MCF 10A (cell line): ENCODE measurements at regions of chr22 and their contacts with region 1.

Region 1: DNA sequence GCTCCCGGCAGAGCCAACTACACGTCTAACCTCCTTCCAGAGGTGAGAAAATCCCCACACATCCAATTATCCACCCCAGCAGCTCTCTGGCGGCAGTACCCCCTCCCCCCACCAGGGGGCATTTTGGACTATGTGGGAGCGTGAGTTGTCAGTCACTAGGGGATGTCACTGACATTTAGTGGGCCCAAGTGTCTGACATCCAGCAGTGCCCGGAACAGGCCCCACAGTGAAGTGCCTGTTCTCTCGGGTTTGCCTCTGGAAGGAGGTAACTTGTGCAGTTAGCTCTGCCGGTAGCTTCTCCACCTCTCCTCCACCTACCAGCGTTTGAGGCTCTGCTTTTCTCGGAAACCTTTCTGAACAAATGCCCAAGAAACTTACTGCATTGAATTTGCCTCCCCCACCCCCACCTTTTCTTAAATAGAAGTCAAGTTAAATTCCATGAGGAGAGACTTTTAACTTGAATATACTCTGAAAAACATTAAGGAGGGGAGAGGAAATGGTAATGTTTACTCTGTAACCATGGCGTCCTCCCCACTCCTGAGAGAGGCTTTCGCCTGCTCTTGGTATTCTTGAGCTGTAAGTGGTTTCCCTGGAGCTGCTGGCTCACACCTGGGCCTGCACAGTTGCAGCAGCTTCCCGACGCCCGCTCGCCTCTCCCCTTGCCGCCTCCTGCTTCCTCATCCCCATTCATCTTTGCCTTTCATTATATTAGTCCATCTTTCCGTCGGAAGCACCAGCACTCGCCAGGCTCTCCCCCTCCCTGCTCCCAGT is 112.8 kb downstream of the WNT7B start:
- DNase-seq: peak; percentile 66
- H3K4me3 Mint-ChIP-seq: no peak overlapping the region
- H3K27ac Mint-ChIP-seq: no peak overlapping the region
- H3K4me1 Mint-ChIP-seq: no peaks in the 10 kb centered on the region
- H3K27me3 Mint-ChIP-seq: peaks cover 17% of the 10 kb centered on the region
- CTCF ChIP-seq: peak; percentile 90

Region 2: DNA sequence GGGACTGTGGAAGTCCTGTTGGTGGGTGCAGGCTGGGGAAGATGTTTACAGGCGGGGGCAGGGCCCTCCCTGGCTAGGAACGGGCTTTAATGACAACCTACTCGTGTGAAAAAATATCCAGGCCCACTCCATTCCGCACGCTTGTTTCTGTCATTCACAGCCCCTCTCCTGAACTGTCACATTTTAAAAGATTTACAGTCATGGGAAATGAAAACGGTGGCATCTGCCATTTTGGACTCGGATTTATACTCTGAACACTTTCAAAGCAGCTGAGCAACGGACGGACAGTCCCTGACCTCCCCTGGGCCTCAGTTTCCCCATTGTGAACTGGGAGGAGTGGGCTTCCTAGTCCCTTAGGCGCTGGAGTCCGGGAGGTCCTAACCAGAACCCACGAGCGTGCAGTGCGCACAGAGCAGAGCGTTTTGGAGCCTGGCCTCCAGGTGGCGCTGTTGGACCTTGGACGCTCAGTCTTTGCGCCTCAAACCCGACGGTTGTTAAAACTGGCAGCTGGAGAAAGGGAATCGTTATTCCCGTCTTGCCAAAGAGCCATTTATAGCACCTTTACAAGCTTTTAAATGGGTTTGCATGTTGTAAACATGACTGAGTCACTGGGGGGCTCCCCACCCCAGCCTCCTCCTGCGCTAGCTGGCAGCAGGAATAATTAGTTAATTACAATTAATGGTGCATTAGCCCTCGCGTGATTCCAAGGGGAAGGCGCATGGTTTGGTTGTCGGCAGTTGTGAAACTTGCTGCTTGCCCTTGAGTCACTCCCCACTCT is 286.2 kb before region 1 on chr22:
- CTCF ChIA-PET with region 1: interaction called, 18 read pairs
- POLR2A ChIA-PET with region 1: no interaction called
- intact Hi-C with region 1: loop called (anchors 1 kb)
- DNase-seq: peak; percentile 80
- H3K4me3 Mint-ChIP-seq: no peak overlapping the region
- H3K27ac Mint-ChIP-seq: no peak overlapping the region
- H3K4me1 Mint-ChIP-seq: no peaks in the 10 kb centered on the region
- H3K27me3 Mint-ChIP-seq: no peaks in the 10 kb centered on the region
- CTCF ChIP-seq: peak; percentile 95

Region 3: GRCh38 chr22:45656577-45656976 is 207.6 kb before region 1 on chr22:
- CTCF ChIA-PET with region 1: interaction called, 11 read pairs
- POLR2A ChIA-PET with region 1: no interaction called
- intact Hi-C with region 1: no loop called
- DNase-seq: no peak
- H3K4me3 Mint-ChIP-seq: no peak overlapping the region
- H3K27ac Mint-ChIP-seq: no peak overlapping the region
- H3K4me1 Mint-ChIP-seq: no peaks in the 10 kb centered on the region
- H3K27me3 Mint-ChIP-seq: no peaks in the 10 kb centered on the region
- CTCF ChIP-seq: no peak

Region 4: GRCh38 chr22:45852826-45853225 is 11.3 kb before region 1 on chr22:
- CTCF ChIA-PET with region 1: interaction called, 19 read pairs
- POLR2A ChIA-PET with region 1: no interaction called
- intact Hi-C with region 1: no loop called
- DNase-seq: no peak
- H3K4me3 Mint-ChIP-seq: no peak overlapping the region
- H3K27ac Mint-ChIP-seq: no peak overlapping the region
- H3K4me1 Mint-ChIP-seq: no peaks in the 10 kb centered on the region
- H3K27me3 Mint-ChIP-seq: no peaks in the 10 kb centered on the region
- CTCF ChIP-seq: no peak

Region 5: DNA sequence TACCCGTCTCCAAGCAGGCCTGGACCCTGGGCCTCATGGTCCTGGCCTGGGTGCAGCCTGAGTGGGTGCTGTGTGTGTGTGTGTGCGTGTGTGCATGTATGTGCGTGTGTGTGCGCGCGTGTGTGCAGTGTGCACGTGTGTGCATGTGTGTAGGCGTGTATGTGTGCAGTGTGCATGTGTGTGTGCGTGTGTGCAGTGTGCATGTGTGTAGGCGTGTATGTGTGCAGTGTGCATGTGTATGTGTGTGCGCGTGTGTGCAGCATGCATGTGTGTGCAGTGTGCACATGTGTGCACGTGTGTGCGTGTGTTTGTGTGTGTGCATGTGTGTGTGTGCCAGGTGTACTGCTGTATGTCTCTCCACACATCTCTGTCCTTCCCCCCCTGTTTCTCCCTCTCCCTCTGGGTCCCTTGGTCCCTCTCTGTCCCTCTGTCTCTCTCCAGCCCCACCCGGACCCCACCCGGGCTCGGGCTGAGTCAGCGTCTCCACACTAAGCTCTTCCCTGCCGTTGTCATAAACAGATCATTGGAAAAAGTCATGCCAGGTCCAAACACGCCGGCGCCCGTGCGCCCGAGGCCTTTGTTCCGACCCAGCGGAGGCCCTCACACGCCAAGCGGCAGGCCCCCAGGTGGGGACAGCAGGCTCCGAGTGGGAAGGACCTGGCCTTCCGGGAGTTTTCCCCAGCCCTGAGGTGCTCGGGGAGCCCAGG is 78.8 kb after region 1 on chr22:
- CTCF ChIA-PET with region 1: interaction called, 12 read pairs
- POLR2A ChIA-PET with region 1: no interaction called
- intact Hi-C with region 1: no loop called
- DNase-seq: no peak
- H3K4me3 Mint-ChIP-seq: no peak overlapping the region
- H3K27ac Mint-ChIP-seq: no peak overlapping the region
- H3K4me1 Mint-ChIP-seq: peaks cover 5% of the 10 kb centered on the region
- H3K27me3 Mint-ChIP-seq: no peaks in the 10 kb centered on the region
- CTCF ChIP-seq: no peak

Region 6: GRCh38 chr22:45958971-45959370 is 94.8 kb after region 1 on chr22:
- CTCF ChIA-PET with region 1: interaction called, 10 read pairs
- POLR2A ChIA-PET with region 1: no interaction called
- intact Hi-C with region 1: no loop called
- DNase-seq: no peak
- H3K4me3 Mint-ChIP-seq: no peak overlapping the region
- H3K27ac Mint-ChIP-seq: no peak overlapping the region
- H3K4me1 Mint-ChIP-seq: no peaks in the 10 kb centered on the region
- H3K27me3 Mint-ChIP-seq: no peaks in the 10 kb centered on the region
- CTCF ChIP-seq: no peak

Region 7: DNA sequence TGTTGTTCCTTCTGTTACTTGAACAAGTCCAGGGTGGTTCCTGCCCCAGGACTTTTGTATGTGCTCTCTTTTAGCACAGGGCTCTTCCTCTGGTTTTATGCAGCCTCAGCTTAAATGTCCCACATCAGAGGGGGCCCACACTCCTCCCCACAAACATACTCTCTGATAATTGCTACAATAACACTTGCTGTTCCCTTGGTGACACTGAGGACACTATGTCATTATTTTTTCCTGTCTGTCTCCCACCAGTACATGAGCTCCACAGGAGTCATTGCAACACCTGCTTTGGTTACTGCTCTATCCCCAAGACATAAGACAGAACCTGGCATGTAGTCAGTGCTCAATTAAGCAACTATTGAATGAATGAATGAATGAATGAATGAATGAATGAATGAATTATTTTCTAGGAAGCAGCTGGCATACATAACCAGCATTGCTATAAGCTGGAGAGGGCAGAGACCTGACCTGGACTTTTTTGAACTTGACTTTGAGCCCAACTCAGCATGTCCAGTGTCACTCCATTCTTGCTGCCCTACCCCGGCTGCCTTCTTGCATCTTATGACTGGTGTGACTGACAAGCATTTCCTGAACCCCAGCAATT is 120.2 kb after region 1 on chr22:
- CTCF ChIA-PET with region 1: interaction called, 11 read pairs
- POLR2A ChIA-PET with region 1: interaction called, 3 read pairs
- intact Hi-C with region 1: no loop called
- DNase-seq: no peak
- H3K4me3 Mint-ChIP-seq: no peak overlapping the region
- H3K27ac Mint-ChIP-seq: no peak overlapping the region
- H3K4me1 Mint-ChIP-seq: no peaks in the 10 kb centered on the region
- H3K27me3 Mint-ChIP-seq: peaks cover 20% of the 10 kb centered on the region
- CTCF ChIP-seq: no peak

Region 8: DNA sequence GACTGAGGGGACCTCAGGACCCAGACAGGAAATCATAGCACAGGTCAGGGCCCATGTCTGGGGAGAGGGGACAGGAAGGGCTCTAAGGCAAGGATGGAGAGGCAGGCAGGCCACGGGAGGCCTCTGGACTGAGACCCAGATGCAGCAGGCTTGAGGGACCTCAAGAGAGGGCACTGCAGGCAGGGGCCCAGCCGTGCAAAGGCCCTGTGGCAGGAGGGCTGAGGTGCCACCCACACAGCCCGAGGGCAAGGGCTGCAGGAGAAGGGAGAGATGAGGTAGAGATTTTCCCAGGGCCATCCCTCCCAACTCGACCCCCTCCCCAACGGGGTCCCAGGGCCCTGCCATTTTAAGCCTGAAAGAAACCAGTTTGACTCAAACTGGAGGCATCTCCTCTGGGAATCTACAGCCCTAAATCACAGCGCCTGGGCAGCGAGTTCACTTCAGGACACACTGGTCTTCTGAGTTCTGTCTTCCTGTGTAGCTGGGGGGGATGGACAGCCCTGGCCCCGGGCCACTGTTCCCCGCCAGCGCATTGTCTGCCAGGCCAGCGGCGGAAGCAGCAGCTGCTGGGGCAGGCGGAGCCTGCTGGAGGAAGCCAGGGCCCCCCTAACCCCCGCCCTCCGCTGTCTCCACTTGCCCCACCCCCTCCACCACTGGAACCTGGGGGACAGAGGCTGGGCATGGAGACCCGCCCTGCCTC is 133.1 kb after region 1 on chr22:
- CTCF ChIA-PET with region 1: no interaction called
- POLR2A ChIA-PET with region 1: no interaction called
- intact Hi-C with region 1: no loop called
- DNase-seq: peak; percentile 51
- H3K4me3 Mint-ChIP-seq: no peak overlapping the region
- H3K27ac Mint-ChIP-seq: no peak overlapping the region
- H3K4me1 Mint-ChIP-seq: no peaks in the 10 kb centered on the region
- H3K27me3 Mint-ChIP-seq: no peaks in the 10 kb centered on the region
- CTCF ChIP-seq: no peak